BJ (cell line): ENCODE measurements at regions of chr19 and their contacts with region 1.

Region 1: GRCh38 chr19:2475702-2476450 is at the start of gene GADD45B:
- DNase-seq: peak; percentile 85
- H3K4me3 ChIP-seq: peak within 1 kb of the TSS; percentile 70
- H3K27me3 ChIP-seq: no peaks in the 10 kb centered on the region
- CTCF ChIP-seq: no peak
- polyA plus RNA-seq, gene GADD45B: 54.5 and 69.8 TPM in 2 replicates

Region 2: DNA sequence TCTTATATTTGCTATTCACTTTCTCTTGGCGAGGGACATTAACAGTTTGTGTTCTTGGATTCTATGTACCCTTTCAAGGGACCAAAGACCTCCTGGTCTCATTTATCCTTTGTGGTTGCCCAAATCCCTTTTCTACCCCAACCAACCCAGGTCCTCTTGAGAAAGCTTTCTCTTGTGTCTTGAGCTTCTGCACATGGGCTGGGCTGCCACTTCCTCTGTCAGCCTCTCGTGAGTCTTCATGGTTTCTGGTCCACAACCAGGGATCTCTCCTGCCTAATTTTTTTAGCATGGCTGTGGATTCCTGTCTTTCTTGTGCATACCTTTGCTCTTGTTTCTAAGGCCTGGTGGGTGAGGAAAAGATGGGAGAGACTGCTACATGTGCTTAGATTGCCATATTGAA is 63.4 kb before region 1 on chr19:
- CTCF ChIA-PET with region 1: no interaction called
- POLR2A ChIA-PET with region 1: no interaction called
- DNase-seq: no peak
- H3K4me3 ChIP-seq: no peak overlapping the region
- H3K27me3 ChIP-seq: no peaks in the 10 kb centered on the region
- CTCF ChIP-seq: no peak

Region 3: GRCh38 chr19:2462635-2463421 is 13.0 kb before region 1 on chr19:
- CTCF ChIA-PET with region 1: interaction called, 10 read pairs
- POLR2A ChIA-PET with region 1: interaction called, 9 read pairs
- DNase-seq: peak; percentile 57
- H3K4me3 ChIP-seq: peak overlapping the region; percentile 48
- H3K27me3 ChIP-seq: no peaks in the 10 kb centered on the region
- CTCF ChIP-seq: no peak

Region 4: GRCh38 chr19:2491130-2491801 is 15.4 kb after region 1 on chr19:
- CTCF ChIA-PET with region 1: interaction called, 11 read pairs
- POLR2A ChIA-PET with region 1: no interaction called
- DNase-seq: no peak
- H3K4me3 ChIP-seq: no peak overlapping the region
- H3K27me3 ChIP-seq: no peaks in the 10 kb centered on the region
- CTCF ChIP-seq: no peak

Region 5: GRCh38 chr19:2543463-2544442 is 67.9 kb after region 1 on chr19:
- CTCF ChIA-PET with region 1: interaction called, 16 read pairs
- POLR2A ChIA-PET with region 1: interaction called, 18 read pairs
- DNase-seq: peak; percentile 91
- H3K4me3 ChIP-seq: no peak overlapping the region
- H3K27me3 ChIP-seq: no peaks in the 10 kb centered on the region
- CTCF ChIP-seq: peak; percentile 52

Region 6: DNA sequence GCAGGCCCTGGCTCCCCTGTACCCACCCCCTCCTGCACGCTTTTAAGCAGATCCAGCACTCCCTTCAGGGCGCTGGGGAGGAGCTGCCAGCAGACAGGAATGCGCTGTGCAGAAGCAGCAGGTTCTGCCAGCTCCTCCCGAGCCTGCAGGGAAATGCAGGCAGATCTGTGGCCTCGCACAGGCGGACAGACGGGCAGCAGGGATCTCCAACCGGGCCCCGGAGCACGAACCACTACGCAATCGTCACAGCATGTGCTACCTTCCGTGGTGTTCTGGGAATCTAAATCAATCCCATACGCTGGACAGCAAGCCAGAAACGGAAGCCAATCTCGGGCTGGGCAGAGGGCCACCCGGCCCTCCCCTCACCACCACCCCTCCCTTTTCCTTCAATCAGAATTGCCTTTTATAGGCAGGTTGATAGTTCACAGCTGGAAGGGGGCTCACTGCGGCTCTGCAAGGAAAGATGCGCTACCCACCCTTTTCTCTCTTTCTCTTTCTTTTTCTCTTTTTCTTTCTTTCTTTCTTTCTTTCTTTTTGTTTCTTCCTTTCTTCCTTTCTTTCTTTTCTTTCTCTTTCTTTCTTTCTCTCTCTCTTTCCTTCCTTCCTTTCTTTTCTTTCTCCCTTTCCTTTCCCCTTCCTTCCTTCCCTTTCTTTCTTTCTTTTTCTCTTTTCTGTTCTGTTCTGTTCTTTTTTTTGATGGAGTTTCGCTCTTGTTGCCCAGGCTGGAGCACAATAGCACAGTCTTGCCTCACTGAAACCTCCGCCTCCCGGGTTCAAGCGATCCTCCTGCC is 126.7 kb after region 1 on chr19:
- CTCF ChIA-PET with region 1: interaction called, 17 read pairs
- POLR2A ChIA-PET with region 1: interaction called, 38 read pairs
- DNase-seq: peak; percentile 97
- H3K4me3 ChIP-seq: peak overlapping the region; percentile 27
- H3K27me3 ChIP-seq: no peaks in the 10 kb centered on the region
- CTCF ChIP-seq: peak; percentile 27; the same call in 1 of the 2 replicates